ENCODE measurements at regions of chr2 and their contacts with region 1.

Region 1: GRCh38 chr2:54899576-54900200 is 150.6 kb downstream of the RTN4 start:
- DNase-seq: peak in 4 of 7 donors; percentile 19 to 57 (median 29)
- H3K4me3 ChIP-seq: no peak overlapping the region
- H3K27ac ChIP-seq: no peak overlapping the region
- H3K4me1 ChIP-seq: no peaks in the 10 kb centered on the region
- H3K27me3 ChIP-seq: no peaks in the 10 kb centered on the region
- CTCF ChIP-seq: peak; percentile 12 to 64 (median 54)
- POLR2A ChIP-seq: no peak

Region 2: DNA sequence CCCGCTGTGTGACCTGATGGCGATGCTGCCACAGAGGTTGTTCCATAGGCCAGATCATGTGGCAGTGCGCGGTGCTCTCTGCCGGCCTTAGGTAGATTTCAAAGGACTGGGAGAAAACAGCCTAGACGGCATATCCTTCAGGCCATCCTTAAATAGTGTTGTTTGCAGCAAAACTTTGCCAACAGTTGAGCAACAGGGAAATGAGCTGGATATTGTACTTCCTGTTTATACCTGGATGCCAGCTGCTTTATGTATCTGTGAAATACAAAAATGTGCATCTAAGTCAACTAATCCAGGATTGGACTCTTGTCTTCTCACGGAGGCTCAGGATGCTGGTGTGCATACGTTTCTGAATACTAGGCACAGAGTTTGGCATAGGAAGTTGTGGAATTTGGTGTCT is 69.1 kb before region 1 on chr2:
- intact Hi-C with region 1: no loop called
- DNase-seq: no peak
- H3K4me3 ChIP-seq: no peak overlapping the region
- H3K27ac ChIP-seq: no peak overlapping the region
- H3K4me1 ChIP-seq: no peaks in the 10 kb centered on the region
- H3K27me3 ChIP-seq: no peaks in the 10 kb centered on the region
- CTCF ChIP-seq: no peak
- POLR2A ChIP-seq: no peak

Region 3: GRCh38 chr2:54977149-54977548 is 77.5 kb after region 1 on chr2:
- intact Hi-C with region 1: no loop called
- DNase-seq: no peak
- H3K4me3 ChIP-seq: no peak overlapping the region
- H3K27ac ChIP-seq: peak overlapping the region in 2 of 5 donors; percentile 11 to 38
- H3K4me1 ChIP-seq: peaks cover 30 to 56% of the 10 kb centered on the region in 2 donors
- H3K27me3 ChIP-seq: no peaks in the 10 kb centered on the region
- CTCF ChIP-seq: no peak
- POLR2A ChIP-seq: no peak

Region 4: GRCh38 chr2:55175254-55176025 is 275.8 kb after region 1 on chr2:
- intact Hi-C with region 1: loop called in 1 of 2 experiments (anchors 10 kb)
- DNase-seq: no peak
- H3K4me3 ChIP-seq: no peak overlapping the region
- H3K27ac ChIP-seq: no peak overlapping the region
- H3K4me1 ChIP-seq: peaks cover 0 to 21% of the 10 kb centered on the region in 2 donors
- H3K27me3 ChIP-seq: no peaks in the 10 kb centered on the region
- CTCF ChIP-seq: peak; percentile 36 to 77 (median 68)
- POLR2A ChIP-seq: no peak

Measured in adrenal gland (tissue), 19 donors.